ENCODE measurements at regions of chr6 and their contacts with region 1.

Region 1: DNA sequence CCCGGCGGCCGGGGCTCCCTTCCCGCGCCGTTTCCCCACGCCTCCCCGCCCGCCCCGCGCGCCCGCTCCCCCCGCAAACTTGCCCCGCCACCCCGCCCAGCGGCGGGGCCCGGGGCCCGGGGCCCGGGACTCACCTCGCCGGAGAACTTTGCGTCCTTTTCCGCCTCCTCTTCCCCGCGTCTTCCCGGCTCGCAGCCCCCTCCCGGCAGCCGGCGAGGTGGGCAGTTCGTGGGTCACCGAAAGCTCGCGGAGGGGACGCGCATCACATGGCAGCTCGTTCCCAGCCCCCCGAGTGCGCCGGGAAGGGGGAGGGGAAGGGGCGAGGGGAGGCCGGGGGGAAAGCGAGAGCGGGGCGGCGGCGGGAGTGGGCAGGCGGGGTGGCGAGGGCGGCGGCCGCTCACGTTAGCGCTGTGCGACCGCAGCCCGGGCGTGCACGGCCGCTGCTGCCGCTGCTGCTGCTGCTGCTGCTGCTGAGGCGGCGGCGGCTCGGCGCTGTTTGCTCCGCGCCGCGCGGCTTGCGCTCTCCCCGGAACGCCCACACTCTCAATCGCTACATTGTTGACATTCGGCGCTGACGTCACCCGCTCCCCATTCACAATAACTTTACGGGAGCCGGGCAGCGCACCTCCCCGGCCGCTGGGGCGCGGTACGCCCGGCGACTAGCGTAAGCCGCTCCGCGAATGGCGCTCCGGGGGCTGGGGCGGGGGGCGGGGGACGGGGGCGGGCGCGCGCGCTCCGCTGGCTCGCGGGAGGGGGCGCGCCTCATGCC is at the start of gene BACH2:
- DNase-seq: peak; percentile 95
- H3K4me3 ChIP-seq: peak within 1 kb of the TSS; percentile 70 to 96 (median 86)
- H3K27ac ChIP-seq: peak within 1 kb of the TSS; percentile 80 to 94 (median 89)
- H3K4me1 ChIP-seq: peaks cover 0 to 28% (median 11%) of the 10 kb centered on the region in 4 donors
- H3K27me3 ChIP-seq: no peaks in the 10 kb centered on the region
- CTCF ChIP-seq: peak in 1 of 4 experiments; percentile 19
- EP300 ChIP-seq: no peak
- POLR2A ChIP-seq: no peak
- total RNA-seq, gene BACH2: 1.1 to 4.6 (median 2.1) TPM

Region 2: DNA sequence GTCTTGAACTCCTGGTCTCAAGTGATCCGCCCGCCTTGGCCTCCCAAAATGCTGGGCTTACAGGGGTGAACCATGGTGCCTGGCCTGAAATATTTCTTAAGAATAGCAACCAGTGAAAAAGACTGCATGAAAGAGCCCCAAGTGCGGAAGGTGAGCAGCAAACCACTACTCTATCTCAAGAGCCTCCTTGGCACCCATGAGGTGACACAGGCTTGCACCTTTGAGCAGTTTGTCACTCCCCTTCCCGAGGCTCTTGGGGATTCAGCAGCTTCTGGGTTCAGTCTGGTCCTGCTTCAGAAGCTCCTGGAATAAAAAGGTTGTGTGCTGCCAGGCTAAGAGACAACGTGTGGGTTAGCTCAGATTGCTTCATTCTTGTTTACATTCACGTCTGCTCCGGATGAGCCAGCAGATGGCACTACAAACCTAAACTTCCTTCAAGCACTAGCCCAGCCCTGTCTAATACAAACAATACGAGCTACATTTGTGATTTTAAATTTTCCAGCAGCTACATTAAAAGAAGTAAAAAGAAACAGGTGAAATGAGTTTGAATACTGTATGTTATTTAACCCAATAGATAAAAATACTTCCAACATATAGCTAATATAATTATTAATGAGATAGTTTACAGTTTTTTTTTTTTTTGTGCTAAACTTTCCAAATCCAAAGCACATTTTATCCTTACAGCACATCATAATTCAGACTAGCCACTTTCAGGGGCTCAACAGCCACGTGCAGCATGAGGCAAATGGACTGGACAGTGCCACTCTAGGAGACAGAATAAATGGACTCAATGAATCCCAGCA is 356.1 kb before region 1 on chr6:
- intact Hi-C with region 1: loop called (anchors 10 kb)
- DNase-seq: peak; percentile 82
- H3K4me3 ChIP-seq: no peak overlapping the region
- H3K27ac ChIP-seq: no peak overlapping the region
- H3K4me1 ChIP-seq: peaks cover 0 to 9% (median 2%) of the 10 kb centered on the region in 4 donors
- H3K27me3 ChIP-seq: no peaks in the 10 kb centered on the region
- CTCF ChIP-seq: peak; percentile 13 to 59 (median 54)
- EP300 ChIP-seq: no peak
- POLR2A ChIP-seq: no peak

Region 3: GRCh38 chr6:89984926-89985750 is 311.4 kb before region 1 on chr6:
- intact Hi-C with region 1: no loop called
- DNase-seq: peak; percentile 72
- H3K4me3 ChIP-seq: no peak overlapping the region
- H3K27ac ChIP-seq: peak overlapping the region in 1 of 4 donors; percentile 29
- H3K4me1 ChIP-seq: peaks cover 0 to 19% (median 9%) of the 10 kb centered on the region in 4 donors
- H3K27me3 ChIP-seq: no peaks in the 10 kb centered on the region
- CTCF ChIP-seq: no peak
- EP300 ChIP-seq: no peak
- POLR2A ChIP-seq: no peak

Region 4: DNA sequence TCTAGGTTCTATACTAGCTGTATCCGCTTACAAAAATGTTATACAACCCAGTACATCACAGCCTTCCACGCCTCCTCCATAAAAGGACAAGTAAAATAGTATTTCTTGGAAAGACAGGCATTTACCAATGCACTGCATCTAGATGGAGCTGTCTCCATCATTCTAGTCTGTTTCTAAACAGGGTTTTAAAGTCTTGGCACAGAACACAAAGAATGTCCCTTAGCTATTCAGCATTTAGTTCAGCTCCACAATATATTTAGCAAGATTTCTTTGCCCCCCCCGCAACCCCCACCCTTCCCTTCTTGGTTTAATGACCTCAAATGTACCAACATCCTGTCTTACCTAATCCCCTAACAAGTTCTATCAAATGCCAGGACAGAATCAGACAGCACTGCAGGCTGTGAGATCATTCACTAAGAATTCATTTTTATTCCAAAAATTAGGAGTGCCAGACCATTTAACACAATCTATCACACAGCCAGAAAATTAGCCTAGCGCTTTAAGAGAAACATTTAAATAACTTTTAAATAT is 198.5 kb before region 1 on chr6:
- intact Hi-C with region 1: loop called (anchors 5 kb)
- DNase-seq: peak; percentile 82
- H3K4me3 ChIP-seq: no peak overlapping the region
- H3K27ac ChIP-seq: peak overlapping the region; percentile 53 to 81 (median 74)
- H3K4me1 ChIP-seq: peaks cover 0 to 22% (median 19%) of the 10 kb centered on the region in 4 donors
- H3K27me3 ChIP-seq: no peaks in the 10 kb centered on the region
- CTCF ChIP-seq: peak in 1 of 4 experiments; percentile 9
- EP300 ChIP-seq: peak in 1 of 4 donors; percentile 27
- POLR2A ChIP-seq: no peak

Region 5: GRCh38 chr6:90369024-90369519 is 72.5 kb after region 1 on chr6:
- intact Hi-C with region 1: loop called (anchors 1 kb)
- DNase-seq: peak; percentile 88
- H3K4me3 ChIP-seq: no peak overlapping the region
- H3K27ac ChIP-seq: peak overlapping the region; percentile 72 to 83 (median 80)
- H3K4me1 ChIP-seq: peaks cover 0 to 19% (median 17%) of the 10 kb centered on the region in 4 donors
- H3K27me3 ChIP-seq: no peaks in the 10 kb centered on the region
- CTCF ChIP-seq: no peak
- EP300 ChIP-seq: peak in 2 of 4 donors; percentile 72 to 81
- POLR2A ChIP-seq: no peak

Region 6: DNA sequence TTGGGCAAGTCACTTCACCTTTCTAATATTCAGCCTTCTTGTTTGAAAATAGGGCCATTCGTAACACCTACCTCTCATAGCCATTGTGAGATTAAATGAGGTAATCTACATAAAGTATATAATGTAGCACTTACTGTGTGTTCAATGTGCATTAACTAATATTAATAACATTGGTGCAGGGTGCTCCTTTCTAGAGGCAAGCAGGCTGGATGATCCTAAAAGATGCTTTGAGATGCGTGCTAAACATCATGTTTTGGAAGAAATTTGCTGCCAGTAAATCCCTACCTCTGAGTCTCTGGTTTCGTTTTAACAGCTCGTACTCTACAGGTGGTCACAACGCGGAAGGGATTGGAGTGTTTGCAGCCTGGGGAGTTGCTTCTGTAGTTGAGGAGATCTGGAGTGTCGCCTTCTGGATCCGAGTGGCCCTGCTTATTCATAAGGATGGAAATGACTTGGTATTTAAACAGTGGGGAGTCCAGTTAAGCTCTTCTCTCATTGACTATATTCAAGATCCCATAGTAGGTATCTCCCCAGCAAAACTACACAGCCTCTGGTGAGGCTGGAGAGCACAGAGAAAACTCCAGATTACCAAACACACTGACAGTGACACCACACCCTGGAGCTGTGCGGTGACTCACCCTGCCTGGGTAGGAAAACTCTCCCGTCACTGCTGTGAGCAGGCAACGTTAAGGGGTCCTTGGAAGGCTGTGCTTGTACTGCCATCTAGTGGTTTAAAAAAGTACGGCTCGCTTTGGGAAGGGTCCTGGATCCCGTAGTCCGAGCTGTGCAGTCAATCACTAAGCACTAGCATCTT is 182.5 kb after region 1 on chr6:
- intact Hi-C with region 1: loop called (anchors 5 kb)
- DNase-seq: peak; percentile 95
- H3K4me3 ChIP-seq: no peak overlapping the region
- H3K27ac ChIP-seq: peak overlapping the region in 1 of 4 donors; percentile 19
- H3K4me1 ChIP-seq: peaks cover 0 to 5% (median 2%) of the 10 kb centered on the region in 4 donors
- H3K27me3 ChIP-seq: no peaks in the 10 kb centered on the region
- CTCF ChIP-seq: peak; percentile 67 to 89 (median 80)
- EP300 ChIP-seq: no peak
- POLR2A ChIP-seq: no peak